BJ (cell line): ENCODE measurements at regions of chr2 and their contacts with region 1.

Region 1: DNA sequence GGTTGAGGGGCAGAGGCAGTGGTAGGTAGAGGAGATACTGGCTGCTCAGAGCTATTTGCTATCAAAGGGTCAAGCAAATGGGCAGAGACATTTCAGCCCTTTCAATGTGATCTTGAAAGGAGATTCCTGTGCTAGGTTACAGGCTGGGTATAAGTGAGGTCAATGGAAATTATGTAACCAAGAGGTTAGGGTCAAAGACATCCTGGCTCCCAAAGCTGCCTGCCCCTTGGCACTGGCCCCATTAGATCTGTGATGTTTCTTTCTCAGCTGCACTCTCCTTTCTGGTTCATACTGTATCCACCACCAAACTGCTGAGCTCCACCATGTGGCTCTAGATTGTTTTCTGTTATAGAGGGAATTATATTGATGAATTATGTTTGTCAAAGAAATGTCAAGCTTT is 200.4 kb downstream of the AGPS start:
- DNase-seq: no peak
- H3K4me3 ChIP-seq: no peak overlapping the region
- H3K27me3 ChIP-seq: peaks cover 1% of the 10 kb centered on the region; the same call in 1 of the 2 replicates
- CTCF ChIP-seq: no peak

Region 2: DNA sequence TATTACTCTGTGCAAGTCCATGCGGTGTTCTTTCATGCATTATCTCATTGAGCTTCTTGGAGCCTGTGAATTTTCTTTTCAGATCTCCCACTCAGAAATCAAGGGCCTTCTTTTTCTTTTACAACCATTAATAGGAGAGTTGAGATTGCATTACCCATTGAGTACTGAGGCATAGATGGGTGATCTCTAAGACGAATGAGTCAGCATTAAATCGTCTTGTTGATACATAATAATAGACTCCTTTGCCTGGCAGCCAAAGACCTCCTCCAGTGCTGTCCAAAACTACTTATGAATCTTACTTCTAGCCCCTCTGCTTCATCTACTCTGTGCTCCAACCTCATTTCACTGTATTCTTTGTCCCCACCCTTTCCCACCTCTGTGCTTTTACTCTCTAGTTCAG is 19.8 kb before region 1 on chr2:
- CTCF ChIA-PET with region 1: no interaction called
- POLR2A ChIA-PET with region 1: no interaction called
- DNase-seq: no peak
- H3K4me3 ChIP-seq: no peak overlapping the region
- H3K27me3 ChIP-seq: no peaks in the 10 kb centered on the region
- CTCF ChIP-seq: no peak

Region 3: DNA sequence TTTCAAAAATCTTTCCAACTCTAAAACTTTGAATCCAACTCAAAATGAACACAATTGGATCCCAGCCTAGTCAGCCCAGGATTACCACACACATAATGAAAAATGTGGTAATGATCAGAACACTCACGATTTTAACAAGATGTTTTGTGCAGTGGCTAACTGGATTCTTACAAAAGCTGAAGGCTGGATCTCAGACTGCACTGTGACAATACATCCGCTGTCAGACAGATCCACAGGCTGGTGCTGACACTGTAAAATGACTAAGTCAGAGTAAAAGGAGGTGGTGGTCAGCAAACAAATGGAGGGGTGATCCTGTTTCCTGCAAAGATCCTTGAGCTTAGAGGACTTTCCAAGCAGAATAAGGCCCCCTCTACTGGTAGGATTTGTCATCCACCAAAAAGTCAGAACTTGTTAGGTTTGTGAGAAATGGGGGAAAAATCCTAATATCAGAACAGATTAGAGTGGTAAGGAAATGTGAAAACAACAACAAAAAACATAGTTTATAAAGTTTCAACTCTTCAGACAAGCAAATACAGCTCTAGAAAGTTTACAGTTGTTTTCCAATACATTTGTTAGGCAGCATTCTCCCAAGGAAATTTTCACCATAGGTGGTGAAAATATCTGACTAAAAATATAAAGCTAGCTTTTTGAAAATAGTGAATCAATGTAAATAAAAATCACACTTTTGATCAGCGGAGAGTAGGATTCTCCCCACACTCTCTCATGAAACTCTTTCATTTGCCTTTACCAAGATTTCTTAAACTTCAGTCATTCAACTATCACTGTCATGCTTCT is 11.5 kb after region 1 on chr2:
- CTCF ChIA-PET with region 1: interaction called, 10 read pairs
- POLR2A ChIA-PET with region 1: no interaction called
- DNase-seq: peak; percentile 64
- H3K4me3 ChIP-seq: 0 out of 2 replicates have a peak overlapping the region, but pooled peaks have one; percentile 4
- H3K27me3 ChIP-seq: peaks cover 2% of the 10 kb centered on the region; the same call in 1 of the 2 replicates
- CTCF ChIP-seq: peak; percentile 80